ENCODE measurements at regions of chr1 and their contacts with region 1.

Region 1: GRCh38 chr1:90579212-90579802 is 137.8 kb downstream of the BARHL2 start:
- DNase-seq: no peak
- ATAC-seq: peak; percentile 85
- H3K4me3 ChIP-seq: no peak overlapping the region
- H3K27ac ChIP-seq: no peak overlapping the region
- H3K4me1 ChIP-seq: no peaks in the 10 kb centered on the region
- H3K27me3 ChIP-seq: no peaks in the 10 kb centered on the region
- CTCF ChIP-seq: peak; percentile 46 to 66 (median 52); a peak in 5 of 6 replicates
- EP300 ChIP-seq: no peak
- POLR2A ChIP-seq: no peak
- RAD21 ChIP-seq: peak; percentile 57

Region 2: GRCh38 chr1:90133133-90133532 is 446.2 kb before region 1 on chr1:
- CTCF ChIA-PET with region 1: interaction called, 26 read pairs
- POLR2A ChIA-PET with region 1: no interaction called
- RAD21 ChIA-PET with region 1: interaction called, 4 read pairs
- SMC1A ChIA-PET with region 1: interaction called, 7 read pairs
- in situ Hi-C with region 1: no loop called
- intact Hi-C with region 1: loop called (anchors 10 kb)
- DNase-seq: no peak
- ATAC-seq: peak; percentile 92
- H3K4me3 ChIP-seq: no peak overlapping the region
- H3K27ac ChIP-seq: no peak overlapping the region
- H3K4me1 ChIP-seq: no peaks in the 10 kb centered on the region
- H3K27me3 ChIP-seq: no peaks in the 10 kb centered on the region; a peak in 1 of 4 replicates
- CTCF ChIP-seq: peak; percentile 45 to 56 (median 47); a peak in 5 of 6 replicates
- EP300 ChIP-seq: no peak
- POLR2A ChIP-seq: no peak
- RAD21 ChIP-seq: peak; percentile 61

Region 3: GRCh38 chr1:90391126-90391525 is 188.2 kb before region 1 on chr1:
- CTCF ChIA-PET with region 1: no interaction called
- POLR2A ChIA-PET with region 1: no interaction called
- RAD21 ChIA-PET with region 1: no interaction called
- SMC1A ChIA-PET with region 1: no interaction called
- in situ Hi-C with region 1: no loop called
- intact Hi-C with region 1: no loop called
- DNase-seq: no peak
- ATAC-seq: no peak
- H3K4me3 ChIP-seq: no peak overlapping the region
- H3K27ac ChIP-seq: no peak overlapping the region
- H3K4me1 ChIP-seq: no peaks in the 10 kb centered on the region
- H3K27me3 ChIP-seq: no peaks in the 10 kb centered on the region
- CTCF ChIP-seq: no peak
- EP300 ChIP-seq: no peak
- POLR2A ChIP-seq: no peak
- RAD21 ChIP-seq: no peak

Region 4: GRCh38 chr1:90534663-90535295 is 44.5 kb before region 1 on chr1:
- CTCF ChIA-PET with region 1: interaction called, 13 read pairs
- POLR2A ChIA-PET with region 1: no interaction called
- RAD21 ChIA-PET with region 1: interaction called, 11 read pairs
- SMC1A ChIA-PET with region 1: interaction called, 18 read pairs
- in situ Hi-C with region 1: no loop called
- intact Hi-C with region 1: no loop called
- DNase-seq: no peak
- ATAC-seq: peak; percentile 64
- H3K4me3 ChIP-seq: no peak overlapping the region
- H3K27ac ChIP-seq: no peak overlapping the region
- H3K4me1 ChIP-seq: no peaks in the 10 kb centered on the region
- H3K27me3 ChIP-seq: peaks cover 0 to 3% of the 10 kb centered on the region in 2 experiments; a peak in 1 of 4 replicates
- CTCF ChIP-seq: no peak; a peak in 1 of 6 replicates
- EP300 ChIP-seq: 0 out of 4 replicates have a peak, but pooled peaks of 1 of the 2 experiments have one; percentile 28
- POLR2A ChIP-seq: no peak
- RAD21 ChIP-seq: no peak

Region 5: DNA sequence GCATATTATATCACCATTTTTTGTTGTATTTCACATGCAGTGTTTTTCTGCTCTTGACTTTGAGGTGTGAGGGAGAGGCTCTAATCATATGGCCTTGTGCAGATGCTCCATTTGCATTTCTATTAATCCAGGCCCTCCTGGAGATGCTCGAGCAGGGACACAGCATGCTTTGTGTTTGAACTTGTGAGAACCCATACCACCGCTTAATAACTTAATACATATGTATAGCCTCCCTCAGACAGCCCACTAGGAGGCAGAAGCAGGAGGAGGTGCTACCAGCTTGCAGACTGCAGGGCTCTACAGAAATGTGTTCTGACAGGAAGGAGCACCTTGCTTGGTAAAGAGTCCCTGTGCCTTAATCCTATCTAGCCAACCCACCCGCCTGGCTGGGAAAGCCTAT is 17.4 kb before region 1 on chr1:
- CTCF ChIA-PET with region 1: interaction called, 67 read pairs
- POLR2A ChIA-PET with region 1: no interaction called
- RAD21 ChIA-PET with region 1: interaction called, 8 read pairs
- SMC1A ChIA-PET with region 1: interaction called, 10 read pairs
- in situ Hi-C with region 1: no loop called
- intact Hi-C with region 1: no loop called
- DNase-seq: no peak
- ATAC-seq: peak; percentile 65
- H3K4me3 ChIP-seq: no peak overlapping the region
- H3K27ac ChIP-seq: no peak overlapping the region
- H3K4me1 ChIP-seq: no peaks in the 10 kb centered on the region
- H3K27me3 ChIP-seq: no peaks in the 10 kb centered on the region
- CTCF ChIP-seq: no peak
- EP300 ChIP-seq: no peak
- POLR2A ChIP-seq: no peak
- RAD21 ChIP-seq: no peak

Region 6: GRCh38 chr1:90591970-90592356 is 12.7 kb after region 1 on chr1:
- CTCF ChIA-PET with region 1: interaction called, 17 read pairs
- POLR2A ChIA-PET with region 1: no interaction called
- RAD21 ChIA-PET with region 1: interaction called, 8 read pairs
- SMC1A ChIA-PET with region 1: interaction called, 4 read pairs
- in situ Hi-C with region 1: no loop called
- intact Hi-C with region 1: no loop called
- DNase-seq: no peak
- ATAC-seq: no peak
- H3K4me3 ChIP-seq: no peak overlapping the region
- H3K27ac ChIP-seq: no peak overlapping the region
- H3K4me1 ChIP-seq: no peaks in the 10 kb centered on the region
- H3K27me3 ChIP-seq: no peaks in the 10 kb centered on the region
- CTCF ChIP-seq: no peak
- EP300 ChIP-seq: no peak
- POLR2A ChIP-seq: no peak
- RAD21 ChIP-seq: no peak

Region 7: DNA sequence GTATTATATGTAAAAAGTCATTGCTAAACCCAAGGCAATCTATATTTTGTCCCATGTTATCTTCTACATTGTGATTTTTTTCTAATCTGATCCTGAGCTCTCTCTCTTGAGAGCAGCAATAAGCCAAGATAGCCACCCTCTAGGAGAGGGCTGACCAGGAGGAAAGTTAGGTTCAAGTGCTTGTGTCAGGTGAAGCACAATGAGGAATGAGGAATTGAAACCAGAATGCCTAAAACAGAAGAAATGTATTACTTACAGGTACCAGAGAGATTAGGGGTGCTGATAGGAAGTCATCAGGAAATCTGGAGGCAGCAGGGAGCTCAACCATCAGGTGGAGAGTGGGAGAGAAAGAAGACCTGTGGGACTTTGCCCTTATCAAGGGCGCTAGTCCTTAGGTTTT is 223.3 kb after region 1 on chr1:
- CTCF ChIA-PET with region 1: no interaction called
- POLR2A ChIA-PET with region 1: no interaction called
- RAD21 ChIA-PET with region 1: no interaction called
- SMC1A ChIA-PET with region 1: no interaction called
- in situ Hi-C with region 1: no loop called
- intact Hi-C with region 1: no loop called
- DNase-seq: no peak
- ATAC-seq: no peak; the same call in 2 of the 3 replicates
- H3K4me3 ChIP-seq: no peak overlapping the region
- H3K27ac ChIP-seq: no peak overlapping the region
- H3K4me1 ChIP-seq: no peaks in the 10 kb centered on the region
- H3K27me3 ChIP-seq: no peaks in the 10 kb centered on the region
- CTCF ChIP-seq: no peak
- EP300 ChIP-seq: no peak
- POLR2A ChIP-seq: no peak
- RAD21 ChIP-seq: no peak

Region 8: GRCh38 chr1:90964444-90965035 is 385.2 kb after region 1 on chr1:
- CTCF ChIA-PET with region 1: interaction called, 4 read pairs
- POLR2A ChIA-PET with region 1: no interaction called
- RAD21 ChIA-PET with region 1: interaction called, 3 read pairs
- SMC1A ChIA-PET with region 1: no interaction called
- in situ Hi-C with region 1: loop called (anchors 10 kb)
- intact Hi-C with region 1: loop called (anchors 10 kb)
- DNase-seq: no peak
- ATAC-seq: peak; percentile 65
- H3K4me3 ChIP-seq: no peak overlapping the region
- H3K27ac ChIP-seq: no peak overlapping the region
- H3K4me1 ChIP-seq: peaks cover 5% of the 10 kb centered on the region; the same call in 1 of the 2 replicates
- H3K27me3 ChIP-seq: no peaks in the 10 kb centered on the region
- CTCF ChIP-seq: peak; percentile 12 to 56 (median 18); a peak in 2 of 6 replicates
- EP300 ChIP-seq: no peak
- POLR2A ChIP-seq: no peak
- RAD21 ChIP-seq: peak; percentile 43